AG04450 (cell line): ENCODE measurements at regions of chr2 and their contacts with region 1.

Region 1: GRCh38 chr2:178112202-178113152 is at the start of gene RBM45:
- DNase-seq: peak; percentile 81
- H3K4me3 ChIP-seq: peak within 1 kb of the TSS; percentile 99
- H3K27ac ChIP-seq: no peak within 1 kb of the TSS
- H3K27me3 ChIP-seq: no peaks in the 10 kb centered on the region
- CTCF ChIP-seq: peak; percentile 99
- polyA plus RNA-seq, gene RBM45: 13.0 and 21.9 TPM in 2 replicates

Region 2: GRCh38 chr2:177553176-177553884 is 559.1 kb before region 1 on chr2:
- CTCF ChIA-PET with region 1: no interaction called
- POLR2A ChIA-PET with region 1: no interaction called
- DNase-seq: no peak
- H3K4me3 ChIP-seq: peak overlapping the region; percentile 94
- H3K27ac ChIP-seq: no peak overlapping the region
- H3K27me3 ChIP-seq: no peaks in the 10 kb centered on the region
- CTCF ChIP-seq: no peak

Region 3: GRCh38 chr2:177983183-177983788 is 129.2 kb before region 1 on chr2:
- CTCF ChIA-PET with region 1: interaction called, 40 read pairs
- POLR2A ChIA-PET with region 1: no interaction called
- DNase-seq: peak; percentile 47
- H3K4me3 ChIP-seq: no peak overlapping the region
- H3K27ac ChIP-seq: no peak overlapping the region
- H3K27me3 ChIP-seq: no peaks in the 10 kb centered on the region
- CTCF ChIP-seq: peak; percentile 97

Region 4: DNA sequence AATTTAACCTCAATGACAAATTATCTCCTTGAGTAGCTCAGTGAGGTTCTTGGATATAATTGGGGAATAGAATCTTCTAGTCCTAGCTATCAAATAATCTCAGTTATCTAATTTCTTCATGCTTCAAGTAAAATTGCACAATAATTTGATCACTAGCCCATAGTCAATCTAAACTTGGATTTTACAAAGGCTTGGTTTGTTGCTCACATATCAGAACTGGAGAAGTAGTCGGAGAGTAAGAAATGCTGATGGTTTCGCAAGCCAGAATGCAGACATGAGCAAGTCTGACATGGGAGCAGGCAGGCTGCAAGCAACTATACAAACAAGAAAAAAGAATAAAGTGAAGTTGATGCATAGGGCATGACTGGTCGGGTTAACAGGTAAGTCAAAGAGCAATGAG is 28.2 kb before region 1 on chr2:
- CTCF ChIA-PET with region 1: interaction called, 12 read pairs
- POLR2A ChIA-PET with region 1: no interaction called
- DNase-seq: no peak
- H3K4me3 ChIP-seq: no peak overlapping the region
- H3K27ac ChIP-seq: no peak overlapping the region
- H3K27me3 ChIP-seq: no peaks in the 10 kb centered on the region
- CTCF ChIP-seq: no peak

Region 5: GRCh38 chr2:178101321-178102079 is 11.0 kb before region 1 on chr2:
- CTCF ChIA-PET with region 1: interaction called, 17 read pairs
- POLR2A ChIA-PET with region 1: no interaction called
- DNase-seq: no peak
- H3K4me3 ChIP-seq: no peak overlapping the region
- H3K27ac ChIP-seq: no peak overlapping the region
- H3K27me3 ChIP-seq: no peaks in the 10 kb centered on the region
- CTCF ChIP-seq: no peak

Region 6: DNA sequence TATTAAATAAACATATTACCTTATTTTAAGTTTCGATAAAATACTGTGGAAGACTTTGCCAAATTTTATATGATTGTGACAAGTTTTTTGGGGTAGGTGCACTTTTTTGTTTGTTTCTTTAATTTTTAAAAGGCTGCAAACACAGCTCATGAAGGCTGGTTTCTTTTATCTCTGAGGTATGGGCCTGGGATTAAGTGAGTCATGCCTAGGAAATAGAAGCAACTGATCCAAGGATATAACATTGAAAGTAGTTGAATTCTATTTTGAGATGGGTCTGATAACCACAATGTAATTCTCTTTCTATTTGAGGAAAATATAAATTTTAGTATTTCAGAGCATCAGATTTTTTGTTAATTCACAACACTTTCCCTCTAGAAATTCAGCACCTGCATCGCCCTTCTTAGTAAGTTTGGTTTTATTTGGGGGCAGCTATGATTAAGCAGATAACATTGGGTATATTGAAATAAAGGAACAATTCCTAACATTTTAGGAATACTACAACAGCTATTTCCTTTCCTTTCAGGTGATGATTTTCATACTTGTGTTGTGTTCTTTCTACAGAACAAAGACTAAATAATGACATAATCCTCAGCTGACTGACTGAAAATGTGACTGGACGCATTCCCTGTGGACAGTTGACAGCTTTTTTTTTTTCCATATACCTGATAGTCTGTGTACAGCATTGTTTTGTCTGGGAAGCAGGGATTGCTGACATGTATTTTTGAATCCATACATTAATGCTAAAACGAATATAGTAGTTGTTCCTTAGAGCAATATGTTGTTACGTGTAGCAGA is 16.6 kb after region 1 on chr2:
- CTCF ChIA-PET with region 1: interaction called, 126 read pairs
- POLR2A ChIA-PET with region 1: no interaction called
- DNase-seq: no peak
- H3K4me3 ChIP-seq: no peak overlapping the region
- H3K27ac ChIP-seq: no peak overlapping the region
- H3K27me3 ChIP-seq: no peaks in the 10 kb centered on the region
- CTCF ChIP-seq: no peak

Region 7: DNA sequence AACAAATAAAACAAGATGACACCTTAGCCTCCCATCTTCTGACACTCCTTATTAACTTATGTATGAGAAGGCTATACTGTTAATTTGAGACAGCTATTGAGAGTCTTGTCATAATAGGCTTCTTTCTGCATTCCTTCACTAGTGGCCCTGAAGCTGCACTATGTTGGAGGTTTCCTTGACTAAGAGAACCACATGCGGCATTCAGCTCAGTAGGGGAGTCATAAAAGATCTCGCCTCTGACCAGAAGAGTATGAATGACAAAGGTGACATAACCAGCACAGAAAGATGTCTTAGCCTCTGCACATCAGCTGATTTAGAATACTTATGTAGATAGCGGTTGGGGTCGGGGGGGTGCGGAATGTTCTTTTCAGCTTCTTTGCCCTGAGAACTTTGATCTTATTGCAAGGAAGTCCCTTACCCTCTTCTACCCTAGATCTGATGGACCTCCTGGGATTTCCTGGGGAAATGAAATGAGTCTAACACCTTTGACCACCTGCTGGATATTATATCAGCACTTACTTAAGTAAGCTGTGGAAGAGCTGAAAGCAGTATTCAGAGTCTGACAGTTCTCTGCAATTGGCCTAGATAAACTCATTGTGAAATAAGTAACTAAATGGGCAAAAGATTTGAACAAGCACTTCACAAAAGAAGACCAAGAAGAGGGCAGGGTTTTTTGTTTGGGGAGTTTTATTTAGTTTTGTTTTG is 24.0 kb after region 1 on chr2:
- CTCF ChIA-PET with region 1: interaction called, 126 read pairs
- POLR2A ChIA-PET with region 1: no interaction called
- DNase-seq: no peak
- H3K4me3 ChIP-seq: no peak overlapping the region
- H3K27ac ChIP-seq: no peak overlapping the region
- H3K27me3 ChIP-seq: no peaks in the 10 kb centered on the region
- CTCF ChIP-seq: no peak

Region 8: DNA sequence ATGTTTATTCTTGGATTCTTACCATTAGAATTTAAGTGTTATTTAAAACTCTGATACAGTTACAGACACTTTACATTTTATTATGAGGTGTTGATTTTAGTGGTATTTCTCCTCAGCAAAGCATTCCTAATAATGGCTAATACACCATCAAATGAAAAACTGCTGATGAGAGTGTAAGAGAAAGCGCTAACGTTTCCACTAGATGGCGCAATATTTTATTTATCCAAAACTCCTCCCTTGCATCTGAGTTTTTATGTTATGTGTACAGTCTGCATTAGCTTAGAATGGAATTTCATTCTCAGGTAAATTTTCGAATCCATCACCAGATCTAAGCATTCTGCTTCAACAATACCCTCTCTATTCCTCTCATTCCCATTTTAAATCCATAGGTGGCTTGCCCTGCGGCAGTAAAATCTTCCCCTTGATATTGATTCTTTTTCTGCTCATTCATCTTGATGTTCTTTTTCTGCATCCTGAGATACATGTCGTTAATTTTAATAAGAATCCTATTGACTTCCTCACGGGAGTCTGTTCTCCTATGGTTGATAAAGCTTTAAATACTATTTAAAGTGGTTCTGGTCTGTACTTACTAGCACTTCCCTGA is 284.6 kb after region 1 on chr2:
- CTCF ChIA-PET with region 1: interaction called, 14 read pairs
- POLR2A ChIA-PET with region 1: no interaction called
- DNase-seq: no peak
- H3K4me3 ChIP-seq: no peak overlapping the region
- H3K27ac ChIP-seq: no peak overlapping the region
- H3K27me3 ChIP-seq: no peaks in the 10 kb centered on the region
- CTCF ChIP-seq: peak; percentile 69